ENCODE measurements at regions of chr17 and their contacts with region 1.

Region 1: DNA sequence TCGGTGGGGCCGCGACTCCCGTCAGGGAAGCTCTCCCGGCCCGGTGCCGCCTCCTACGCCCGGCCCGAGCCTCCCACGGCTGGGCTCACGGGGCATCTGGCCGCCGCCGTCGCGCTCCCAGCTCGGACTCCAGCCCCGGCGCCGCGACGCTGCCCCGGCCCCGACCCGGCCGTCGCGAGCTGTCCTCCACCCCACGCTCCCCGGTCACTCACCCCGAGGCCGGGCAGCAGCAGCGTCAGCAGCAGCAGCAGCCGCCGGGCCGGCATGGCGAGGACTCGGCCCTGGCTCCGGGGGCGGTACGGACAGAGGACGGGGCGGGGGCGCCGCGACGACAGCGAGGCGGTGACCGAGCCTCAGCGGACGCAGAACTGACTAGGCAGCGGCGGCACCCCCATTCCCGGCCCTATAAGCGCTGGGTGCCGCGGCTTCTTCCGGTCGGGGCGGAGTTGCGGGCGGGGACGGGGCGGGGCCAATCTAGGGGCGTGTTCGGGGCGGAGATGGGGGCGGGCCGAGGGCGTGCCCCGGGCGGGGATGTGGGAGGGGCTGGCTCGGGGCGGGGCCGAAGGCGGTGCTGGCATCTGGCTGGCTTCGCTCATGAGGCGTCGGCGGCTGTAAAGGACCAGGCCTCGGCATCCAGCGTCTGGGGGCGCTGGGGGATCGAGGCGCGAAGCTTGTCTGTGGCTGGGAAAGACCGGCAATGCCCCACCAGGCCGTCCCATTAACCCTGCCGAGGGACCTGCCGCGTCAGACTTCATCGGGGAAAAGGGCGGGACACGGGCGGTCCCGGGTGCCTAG is at the start of gene ERN1:
- DNase-seq: peak; percentile 93
- ATAC-seq: peak; percentile 94
- H3K4me3 Mint-ChIP-seq: peak within 1 kb of the TSS; percentile 92
- H3K27ac Mint-ChIP-seq: peak within 1 kb of the TSS; percentile 92
- H3K4me1 Mint-ChIP-seq: peaks cover 36% of the 10 kb centered on the region
- H3K27me3 Mint-ChIP-seq: no peaks in the 10 kb centered on the region
- total RNA-seq, gene ERN1: 13.0 to 17.9 TPM

Region 2: DNA sequence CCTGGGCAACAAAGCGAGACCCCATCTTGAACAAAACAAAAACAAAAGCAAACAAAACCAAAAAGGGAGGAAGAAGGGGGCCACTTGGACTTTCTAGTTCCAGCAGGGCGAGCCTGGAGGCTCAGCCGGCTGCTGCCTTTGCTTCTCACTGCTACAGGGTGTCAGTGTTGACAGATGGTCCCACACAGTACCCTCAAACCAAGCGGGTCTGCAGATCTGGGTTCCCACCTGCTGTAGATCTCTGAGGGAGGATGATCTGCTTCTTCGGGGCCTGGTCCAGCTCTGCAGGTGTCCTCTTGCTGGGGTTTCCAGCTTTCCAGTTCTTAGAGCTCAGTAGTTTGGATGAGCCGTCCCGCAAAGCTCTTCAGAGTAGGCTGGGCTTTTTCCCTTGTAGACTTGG is 225.6 kb before region 1 on chr17:
- CTCF ChIA-PET with region 1: interaction called, 21 read pairs
- POLR2A ChIA-PET with region 1: no interaction called
- DNase-seq: no peak
- ATAC-seq: no peak
- H3K4me3 Mint-ChIP-seq: no peak overlapping the region
- H3K27ac Mint-ChIP-seq: no peak overlapping the region
- H3K4me1 Mint-ChIP-seq: peaks cover 6% of the 10 kb centered on the region
- H3K27me3 Mint-ChIP-seq: peaks cover 35% of the 10 kb centered on the region

Region 3: DNA sequence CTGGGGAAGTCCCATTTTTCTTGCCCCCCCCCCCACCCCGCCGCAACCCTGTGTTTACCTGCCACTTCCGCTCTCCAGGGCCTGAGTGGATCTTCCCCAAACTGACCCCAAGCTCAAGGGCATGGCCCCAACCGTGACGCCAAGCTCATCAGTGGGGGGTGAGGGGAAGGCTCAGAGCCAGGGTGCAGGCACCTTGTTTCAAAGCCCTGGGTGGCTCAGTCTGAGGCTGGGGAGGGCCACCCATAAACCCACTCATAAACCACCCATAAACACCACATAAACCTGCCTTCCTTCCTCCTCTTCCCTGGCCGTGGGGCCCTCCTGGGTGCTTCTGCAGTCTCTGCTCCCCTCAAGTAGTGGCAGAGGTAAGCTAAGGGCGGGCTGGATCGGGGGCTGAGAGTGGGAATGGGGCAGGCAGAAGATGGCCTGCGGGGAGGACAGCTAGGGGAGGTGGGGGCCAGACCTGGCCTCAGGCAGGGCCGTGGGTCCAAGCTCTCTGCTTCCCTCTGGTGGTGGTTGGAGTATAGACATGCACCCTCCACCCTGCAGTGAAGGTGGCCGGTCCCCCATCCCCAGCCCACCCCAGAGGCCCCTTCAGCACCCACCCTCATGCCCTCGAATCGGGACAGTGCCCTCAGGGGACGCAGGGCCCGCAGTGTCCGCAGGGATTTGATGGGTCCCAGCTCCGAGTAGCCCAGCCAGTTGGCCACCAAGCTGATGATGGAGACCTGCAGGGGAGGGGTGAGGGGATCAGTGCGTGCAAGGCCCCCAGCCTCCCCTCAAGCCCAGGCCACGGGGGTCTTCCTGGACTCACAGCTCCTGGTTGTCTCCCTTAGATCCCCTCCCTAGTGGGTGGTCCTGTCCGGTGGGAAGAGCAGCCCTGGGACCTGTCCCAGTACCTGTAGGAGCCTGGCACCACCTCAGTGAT is 183.3 kb before region 1 on chr17:
- CTCF ChIA-PET with region 1: interaction called, 22 read pairs
- POLR2A ChIA-PET with region 1: interaction called, 3 read pairs
- DNase-seq: peak; percentile 72
- ATAC-seq: peak; percentile 86
- H3K4me3 Mint-ChIP-seq: peak overlapping the region; percentile 36
- H3K27ac Mint-ChIP-seq: peak overlapping the region; percentile 62
- H3K4me1 Mint-ChIP-seq: peaks cover 22% of the 10 kb centered on the region
- H3K27me3 Mint-ChIP-seq: peaks cover 30% of the 10 kb centered on the region

Region 4: DNA sequence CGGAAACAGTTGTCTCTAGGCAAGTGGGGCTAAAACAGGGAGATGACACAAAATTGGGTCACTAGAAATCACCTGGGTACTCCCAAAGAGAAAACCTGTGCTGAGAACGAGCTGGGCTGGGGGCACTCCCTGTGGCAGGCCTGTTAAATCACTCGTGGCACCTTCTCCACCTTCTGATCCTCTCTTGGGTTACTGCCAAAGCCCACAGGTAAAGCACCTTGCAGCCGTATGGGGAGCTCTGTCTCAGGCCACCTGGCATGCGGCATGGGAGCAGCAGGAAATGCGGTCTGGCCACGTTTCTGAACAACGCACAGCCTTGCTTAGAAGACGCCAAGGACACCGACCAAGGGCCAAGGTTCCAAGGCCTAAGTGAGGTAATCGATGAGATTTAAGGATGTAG is 88.0 kb before region 1 on chr17:
- CTCF ChIA-PET with region 1: interaction called, 645 read pairs
- POLR2A ChIA-PET with region 1: interaction called, 4 read pairs
- DNase-seq: no peak
- ATAC-seq: no peak
- H3K4me3 Mint-ChIP-seq: no peak overlapping the region
- H3K27ac Mint-ChIP-seq: no peak overlapping the region
- H3K4me1 Mint-ChIP-seq: peaks cover 11% of the 10 kb centered on the region
- H3K27me3 Mint-ChIP-seq: no peaks in the 10 kb centered on the region

Region 5: GRCh38 chr17:64073771-64074703 is 55.9 kb before region 1 on chr17:
- CTCF ChIA-PET with region 1: interaction called, 287 read pairs
- POLR2A ChIA-PET with region 1: interaction called, 3 read pairs
- DNase-seq: no peak
- ATAC-seq: no peak
- H3K4me3 Mint-ChIP-seq: no peak overlapping the region
- H3K27ac Mint-ChIP-seq: no peak overlapping the region
- H3K4me1 Mint-ChIP-seq: peaks cover 19% of the 10 kb centered on the region
- H3K27me3 Mint-ChIP-seq: no peaks in the 10 kb centered on the region

Region 6: GRCh38 chr17:64117981-64118979 is 11.7 kb before region 1 on chr17:
- CTCF ChIA-PET with region 1: interaction called, 28 read pairs
- POLR2A ChIA-PET with region 1: interaction called, 17 read pairs
- DNase-seq: no peak
- ATAC-seq: no peak
- H3K4me3 Mint-ChIP-seq: no peak overlapping the region
- H3K27ac Mint-ChIP-seq: no peak overlapping the region
- H3K4me1 Mint-ChIP-seq: peaks cover 48% of the 10 kb centered on the region
- H3K27me3 Mint-ChIP-seq: no peaks in the 10 kb centered on the region

Region 7: DNA sequence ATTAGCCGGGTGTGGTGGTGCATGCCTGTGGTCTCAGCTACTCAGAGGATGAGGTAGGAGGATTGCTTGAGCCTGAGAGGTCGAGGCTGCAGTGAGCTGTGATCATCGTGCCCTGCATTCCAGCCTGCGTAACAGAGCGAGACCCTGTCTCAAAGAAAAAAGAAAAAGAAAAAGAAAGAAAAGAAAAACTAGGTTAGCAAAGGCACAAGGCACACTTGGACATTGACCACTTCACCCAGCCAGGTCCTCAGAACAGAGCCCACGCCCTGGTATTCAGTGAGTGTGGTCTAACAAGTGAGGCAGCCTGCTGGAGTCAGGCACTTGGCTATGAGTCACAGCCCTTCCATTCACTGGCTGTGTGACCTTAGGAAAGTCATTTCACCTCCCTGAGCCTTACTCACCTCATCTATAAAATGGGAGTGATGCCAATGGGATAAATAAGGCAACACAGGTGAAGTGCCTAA is 329.4 kb after region 1 on chr17:
- CTCF ChIA-PET with region 1: no interaction called
- POLR2A ChIA-PET with region 1: no interaction called
- DNase-seq: no peak
- ATAC-seq: no peak
- H3K4me3 Mint-ChIP-seq: no peak overlapping the region
- H3K27ac Mint-ChIP-seq: no peak overlapping the region
- H3K4me1 Mint-ChIP-seq: peaks cover 24% of the 10 kb centered on the region
- H3K27me3 Mint-ChIP-seq: no peaks in the 10 kb centered on the region

Measured in activated CD8-positive, alpha-beta T cell treated with anti-CD3 and anti-CD28 coated beads, Interleukin-2, amount 10 ng/mL, durations not matched to agents 7 days and 5 days (primary cell).